HCT116 (cell line): ENCODE measurements at regions of chr5 and their contacts with region 1.

Region 1: DNA sequence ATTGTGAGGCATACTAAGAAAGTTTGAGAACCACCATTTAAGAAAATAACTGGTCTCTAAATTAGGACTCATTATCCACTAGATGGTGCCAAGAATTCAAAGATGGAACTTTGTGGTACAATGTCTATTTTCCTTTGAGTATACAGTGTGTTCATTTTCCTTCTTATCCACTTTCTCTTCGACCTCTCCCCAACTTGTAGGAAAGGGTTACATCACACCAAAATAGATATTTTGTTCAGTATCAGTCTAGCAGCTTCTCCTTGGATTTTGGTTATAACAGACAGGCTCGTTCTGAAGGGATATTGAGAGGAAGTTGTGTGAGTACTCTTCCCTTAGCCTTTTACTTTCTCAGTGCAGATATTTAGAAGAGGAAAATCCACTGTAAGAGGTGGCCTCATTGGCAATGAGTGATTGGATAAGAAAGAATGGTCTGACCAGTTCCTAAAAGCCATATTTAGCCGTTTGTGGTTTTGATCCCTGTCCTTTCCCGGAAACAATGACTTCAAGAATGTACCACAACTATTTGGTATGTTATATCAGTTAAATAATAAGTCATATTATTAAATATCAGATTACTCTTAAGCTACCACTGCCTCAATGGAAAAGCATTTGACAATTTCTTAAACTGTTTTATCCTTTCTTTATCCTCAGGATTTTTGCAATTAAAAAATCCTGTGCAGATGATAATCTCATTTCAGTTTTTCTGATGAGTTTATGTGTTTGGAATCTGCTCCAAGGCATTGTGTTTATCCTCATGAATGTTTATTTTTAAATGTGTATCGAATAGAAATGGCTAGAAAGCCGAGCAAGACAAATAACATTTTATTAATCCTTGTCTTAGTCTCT is 69.0 kb upstream of the GRAMD2B start:
- DNase-seq: peak; percentile 64
- ATAC-seq: peak; percentile 85
- H3K4me3 ChIP-seq: peak overlapping the region; percentile 14 to 44
- H3K27ac ChIP-seq: peak overlapping the region; percentile 62
- H3K4me1 ChIP-seq: peaks cover 19 to 32% of the 10 kb centered on the region in 2 experiments; a peak in 3 of 4 replicates
- H3K27me3 ChIP-seq: no peaks in the 10 kb centered on the region
- CTCF ChIP-seq: peak; percentile 31 to 90 (median 71); a peak in 5 of 6 replicates
- POLR2A ChIP-seq: no peak
- RAD21 ChIP-seq: peak; percentile 94

Region 2: GRCh38 chr5:126492936-126493335 is 138.7 kb after region 1 on chr5:
- CTCF ChIA-PET with region 1: interaction called, 3 read pairs
- POLR2A ChIA-PET with region 1: no interaction called
- RAD21 ChIA-PET with region 1: interaction called in 1 of 2 experiments, 3 read pairs
- intact Hi-C with region 1: loop called (anchors 1 kb)
- DNase-seq: no peak
- ATAC-seq: peak; percentile 64
- H3K4me3 ChIP-seq: no peak overlapping the region
- H3K27ac ChIP-seq: no peak overlapping the region
- H3K4me1 ChIP-seq: no peaks in the 10 kb centered on the region
- H3K27me3 ChIP-seq: no peaks in the 10 kb centered on the region
- CTCF ChIP-seq: peak; percentile 44 to 57 (median 48); a peak in 5 of 6 replicates
- POLR2A ChIP-seq: no peak
- RAD21 ChIP-seq: peak; percentile 76

Region 3: DNA sequence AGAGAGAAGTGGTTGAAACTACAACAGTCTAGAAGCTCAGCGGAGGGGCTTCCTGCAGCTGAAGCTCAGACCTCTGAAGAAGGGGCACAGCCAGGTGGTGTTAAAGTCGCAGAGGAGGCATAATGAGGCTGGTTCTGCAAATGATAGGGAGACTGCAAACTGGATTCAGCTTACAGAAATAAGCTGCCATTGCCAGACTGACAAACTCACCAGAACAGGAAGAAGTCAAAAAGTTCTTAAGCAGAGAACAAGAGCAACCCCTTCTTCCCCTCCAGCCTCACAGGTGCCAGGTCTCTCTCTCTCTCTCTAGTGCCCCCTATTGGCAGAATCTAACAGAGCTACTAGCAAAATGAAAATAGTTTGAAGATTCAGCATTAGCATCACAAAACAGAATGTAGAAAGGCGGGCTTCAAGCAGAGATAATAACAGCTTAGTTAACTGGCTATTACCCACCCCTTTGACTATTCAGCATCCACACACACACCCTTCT is 145.7 kb after region 1 on chr5:
- CTCF ChIA-PET with region 1: interaction called, 11 read pairs
- POLR2A ChIA-PET with region 1: no interaction called
- RAD21 ChIA-PET with region 1: no interaction called
- intact Hi-C with region 1: no loop called
- DNase-seq: peak; percentile 24
- ATAC-seq: peak; percentile 72
- H3K4me3 ChIP-seq: no peak overlapping the region
- H3K27ac ChIP-seq: no peak overlapping the region
- H3K4me1 ChIP-seq: no peaks in the 10 kb centered on the region
- H3K27me3 ChIP-seq: no peaks in the 10 kb centered on the region
- CTCF ChIP-seq: peak; percentile 35 to 77 (median 73); a peak in 5 of 6 replicates
- POLR2A ChIP-seq: no peak
- RAD21 ChIP-seq: peak; percentile 48

Region 4: DNA sequence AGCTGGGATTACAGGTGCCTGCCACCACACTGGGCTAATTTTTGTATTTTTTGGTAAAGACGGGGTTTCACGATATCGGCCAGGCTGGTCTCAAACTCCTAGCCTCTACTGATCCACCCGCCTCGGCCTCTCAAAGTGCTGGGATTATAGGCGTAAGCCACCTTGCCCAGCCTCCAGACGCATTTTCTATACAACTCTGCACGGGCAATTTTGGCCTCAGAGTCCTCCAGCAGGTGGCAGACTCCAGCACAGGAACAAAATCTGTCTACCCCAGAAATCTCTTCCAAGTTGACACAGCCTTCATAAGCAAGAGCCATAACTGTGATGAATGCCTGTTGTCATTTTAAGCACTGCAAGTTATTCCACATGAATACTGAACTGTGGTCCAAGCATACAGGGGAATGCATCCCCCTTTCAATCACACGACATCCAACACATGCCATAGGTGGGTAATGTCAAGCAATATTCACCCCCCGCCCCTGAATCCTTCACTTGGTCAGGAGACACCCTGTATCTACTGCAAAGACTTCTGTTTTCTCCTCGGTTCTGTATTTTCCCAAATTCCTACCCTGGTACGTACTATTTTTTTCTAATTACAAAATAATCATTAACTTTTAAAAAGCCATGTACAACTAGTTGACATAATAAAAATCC is 190.0 kb after region 1 on chr5:
- CTCF ChIA-PET with region 1: interaction called, 5 read pairs
- POLR2A ChIA-PET with region 1: no interaction called
- RAD21 ChIA-PET with region 1: no interaction called
- intact Hi-C with region 1: loop called (anchors 1 kb)
- DNase-seq: peak; percentile 19
- ATAC-seq: peak; percentile 79
- H3K4me3 ChIP-seq: no peak overlapping the region
- H3K27ac ChIP-seq: no peak overlapping the region
- H3K4me1 ChIP-seq: no peaks in the 10 kb centered on the region
- H3K27me3 ChIP-seq: no peaks in the 10 kb centered on the region
- CTCF ChIP-seq: peak; percentile 63 to 76 (median 68); a peak in 5 of 6 replicates
- POLR2A ChIP-seq: no peak
- RAD21 ChIP-seq: peak; percentile 56

Region 5: GRCh38 chr5:126594676-126595485 is 240.6 kb after region 1 on chr5 and contains the start of gene ALDH7A1:
- CTCF ChIA-PET with region 1: no interaction called
- POLR2A ChIA-PET with region 1: interaction called, 4 read pairs
- RAD21 ChIA-PET with region 1: interaction called in 1 of 2 experiments, 3 read pairs
- intact Hi-C with region 1: loop called (anchors 1 kb)
- DNase-seq: peak; percentile 83
- ATAC-seq: peak; percentile 94
- H3K4me3 ChIP-seq: peak within 1 kb of the TSS; percentile 73 to 86
- H3K27ac ChIP-seq: peak within 1 kb of the TSS; percentile 67
- H3K4me1 ChIP-seq: peaks cover 0 to 18% of the 10 kb centered on the region in 2 experiments; a peak in 3 of 4 replicates
- H3K27me3 ChIP-seq: no peaks in the 10 kb centered on the region
- CTCF ChIP-seq: peak; percentile 42 to 82 (median 51)
- POLR2A ChIP-seq: peak; percentile 91
- RAD21 ChIP-seq: peak; percentile 74
- total RNA-seq, gene ALDH7A1: 93.2 TPM

Region 6: DNA sequence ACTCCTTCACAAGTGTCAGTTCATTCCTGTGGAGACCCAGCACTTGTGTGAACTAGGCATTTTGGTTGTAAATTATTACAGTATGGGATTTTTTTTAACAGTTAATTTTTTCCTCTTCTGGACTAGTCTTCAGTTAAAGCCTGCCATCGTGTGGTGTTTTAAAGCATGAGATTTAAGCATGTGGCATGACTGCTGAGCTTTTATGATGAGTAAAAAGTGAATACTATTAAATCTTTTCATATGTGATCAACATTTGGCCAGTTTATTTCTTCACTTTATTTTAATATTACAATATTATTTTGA is 447.7 kb after region 1 on chr5:
- CTCF ChIA-PET with region 1: no interaction called
- POLR2A ChIA-PET with region 1: no interaction called
- RAD21 ChIA-PET with region 1: no interaction called
- intact Hi-C with region 1: loop called (anchors 5 kb)
- DNase-seq: no peak
- ATAC-seq: no peak
- H3K4me3 ChIP-seq: no peak overlapping the region
- H3K27ac ChIP-seq: no peak overlapping the region
- H3K4me1 ChIP-seq: peaks cover 4 to 6% of the 10 kb centered on the region in 2 experiments; a peak in 2 of 4 replicates
- H3K27me3 ChIP-seq: no peaks in the 10 kb centered on the region
- CTCF ChIP-seq: peak in 2 of 3 experiments; percentile 25 to 37; a peak in 1 of 6 replicates
- POLR2A ChIP-seq: no peak
- RAD21 ChIP-seq: peak; percentile 55